Aorta (tissue), 5 donors: ENCODE measurements at regions of chr11 and their contacts with region 1.

Region 1: GRCh38 chr11:134050541-134051383 is 18.1 kb upstream of the JAM3 start:
- DNase-seq: peak; percentile 82 to 94
- ATAC-seq: peak; percentile 89
- H3K4me3 ChIP-seq: no peak overlapping the region
- H3K27ac ChIP-seq: no peak overlapping the region
- H3K4me1 ChIP-seq: no peaks in the 10 kb centered on the region
- H3K27me3 ChIP-seq: no peaks in the 10 kb centered on the region

Region 2: DNA sequence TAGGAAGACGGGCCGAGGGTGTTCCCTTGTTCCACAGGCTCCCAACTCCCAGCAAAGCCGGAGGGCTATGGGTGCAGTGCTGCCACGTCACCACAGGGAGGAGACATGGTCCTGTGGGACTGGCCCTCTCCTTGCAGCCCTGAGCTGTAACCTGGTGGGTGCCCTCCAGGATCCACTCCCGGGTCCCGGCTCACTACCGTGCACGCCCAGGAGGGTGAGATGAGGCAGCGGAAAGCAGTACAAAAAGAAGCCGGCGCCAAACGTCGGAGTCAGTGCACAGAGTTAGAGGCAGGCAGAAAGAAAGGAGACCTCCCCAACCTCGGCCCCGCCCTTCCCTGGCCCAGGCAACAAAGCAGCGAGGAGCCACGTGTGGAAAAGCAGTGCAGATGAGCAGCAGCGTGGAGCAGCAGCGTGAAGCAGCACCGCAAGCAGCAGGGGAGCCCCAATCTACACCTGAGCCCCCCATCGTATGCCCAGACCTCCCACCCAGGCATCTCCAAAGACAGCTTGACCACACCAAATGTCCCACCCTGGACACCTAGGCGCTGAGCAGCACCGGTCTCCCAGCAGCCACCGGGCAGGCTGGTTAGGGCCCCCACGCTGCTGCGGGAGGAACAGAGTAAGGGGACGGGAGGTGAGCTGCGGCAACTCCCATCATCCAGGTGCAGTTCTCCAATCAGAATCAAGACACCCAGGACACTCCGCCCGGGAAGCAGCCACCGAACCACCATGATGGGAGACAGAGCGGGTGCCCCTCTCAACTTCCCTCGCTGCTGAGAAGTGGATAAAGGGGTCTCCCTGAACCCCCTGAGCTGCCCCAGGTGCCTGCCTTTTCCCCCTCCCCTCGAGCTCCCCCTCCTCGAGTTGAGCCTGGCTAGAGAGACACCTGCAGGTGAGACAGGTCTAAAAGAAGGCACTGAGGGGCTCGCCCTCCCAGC is 122.8 kb before region 1 on chr11:
- intact Hi-C with region 1: loop called (anchors 2 kb)
- DNase-seq: peak in 1 of 2 donors; percentile 72
- ATAC-seq: peak; percentile 73
- H3K4me3 ChIP-seq: no peak overlapping the region
- H3K27ac ChIP-seq: no peak overlapping the region
- H3K4me1 ChIP-seq: no peaks in the 10 kb centered on the region
- H3K27me3 ChIP-seq: no peaks in the 10 kb centered on the region

Region 3: GRCh38 chr11:133956650-133957633 is 93.8 kb before region 1 on chr11 and contains the start of gene IGSF9B:
- intact Hi-C with region 1: loop called in 1 of 2 experiments (anchors 5 kb)
- DNase-seq: peak; percentile 86 to 95
- ATAC-seq: peak; percentile 91
- H3K4me3 ChIP-seq: peak within 1 kb of the TSS; percentile 40 to 74
- H3K27ac ChIP-seq: peak within 1 kb of the TSS; percentile 44 to 93
- H3K4me1 ChIP-seq: peaks cover 3 to 4% of the 10 kb centered on the region in 2 donors
- H3K27me3 ChIP-seq: no peaks in the 10 kb centered on the region
- total RNA-seq, gene IGSF9B: 59.7 to 93.9 TPM

Region 4: GRCh38 chr11:134101282-134101681 is 50.5 kb after region 1 on chr11:
- intact Hi-C with region 1: no loop called
- DNase-seq: no peak
- ATAC-seq: no peak
- H3K4me3 ChIP-seq: no peak overlapping the region
- H3K27ac ChIP-seq: no peak overlapping the region
- H3K4me1 ChIP-seq: no peaks in the 10 kb centered on the region
- H3K27me3 ChIP-seq: no peaks in the 10 kb centered on the region

Region 5: GRCh38 chr11:134139873-134140331 is 89.1 kb after region 1 on chr11:
- intact Hi-C with region 1: loop called (anchors 1 kb)
- DNase-seq: no peak
- ATAC-seq: peak; percentile 93
- H3K4me3 ChIP-seq: no peak overlapping the region
- H3K27ac ChIP-seq: peak overlapping the region; percentile 55 to 84
- H3K4me1 ChIP-seq: no peaks in the 10 kb centered on the region
- H3K27me3 ChIP-seq: no peaks in the 10 kb centered on the region

Region 6: GRCh38 chr11:134223836-134224709 is 173.3 kb after region 1 on chr11 and contains the starts of genes NCAPD3 and VPS26B:
- intact Hi-C with region 1: loop called in 1 of 2 experiments (anchors 10 kb)
- DNase-seq: peak; percentile 98 to 99
- ATAC-seq: peak; percentile 98
- H3K4me3 ChIP-seq: peak within 1 kb of the TSS; percentile 73 to 79
- H3K27ac ChIP-seq: peak within 1 kb of the TSS in 1 of 2 donors; percentile 78
- H3K4me1 ChIP-seq: peaks cover 0 to 5% of the 10 kb centered on the region in 2 donors
- H3K27me3 ChIP-seq: no peaks in the 10 kb centered on the region
- total RNA-seq, gene NCAPD3: 8.3 to 14.0 TPM
- total RNA-seq, gene VPS26B: 27.6 to 42.9 TPM

Region 7: DNA sequence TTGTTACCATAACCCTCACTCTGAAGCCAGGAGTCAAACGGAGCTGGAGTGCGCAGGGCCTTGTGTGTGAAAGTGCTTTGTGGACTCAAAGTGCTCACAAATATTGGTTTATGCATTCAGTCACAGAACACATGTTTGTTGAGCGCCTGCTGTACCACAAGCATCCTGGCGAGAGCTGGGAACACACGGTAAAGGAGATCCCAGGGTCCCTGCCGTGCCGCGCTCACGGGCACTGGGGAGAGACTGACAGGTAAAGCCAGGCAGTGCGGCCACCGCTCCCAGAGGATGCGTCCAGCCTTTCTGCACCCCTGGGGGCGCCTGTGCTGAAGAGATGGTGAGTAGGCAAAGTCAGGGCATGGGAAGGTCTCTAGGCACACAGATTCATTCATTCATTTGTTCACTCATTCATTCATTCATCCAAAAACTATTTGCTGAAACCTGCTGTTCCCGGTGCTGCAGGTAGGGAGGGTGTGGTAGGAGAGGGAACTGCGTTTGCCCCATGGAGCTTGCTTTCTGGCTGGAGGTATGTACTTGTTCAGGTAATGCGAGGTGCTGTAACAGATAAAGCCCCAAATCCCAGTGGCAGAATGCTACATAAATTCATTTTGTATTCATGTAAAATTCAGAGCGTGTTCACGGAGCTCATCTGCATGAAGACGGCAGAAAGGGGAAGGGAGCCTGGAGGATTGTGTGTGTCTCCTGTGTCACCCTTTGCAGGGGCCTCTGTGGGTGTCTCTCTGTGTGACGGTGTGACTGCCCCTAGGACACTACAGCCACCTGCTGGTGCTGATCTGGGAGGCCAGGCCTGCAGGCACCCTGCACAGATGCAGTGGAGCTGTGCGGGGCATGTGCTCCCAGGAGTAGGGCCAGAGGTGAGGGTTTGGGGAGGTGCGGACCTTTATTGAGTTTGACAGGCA is 528.3 kb after region 1 on chr11:
- intact Hi-C with region 1: no loop called
- DNase-seq: peak in 1 of 2 donors; percentile 67
- ATAC-seq: no peak
- H3K4me3 ChIP-seq: no peak overlapping the region
- H3K27ac ChIP-seq: no peak overlapping the region
- H3K4me1 ChIP-seq: no peaks in the 10 kb centered on the region
- H3K27me3 ChIP-seq: no peaks in the 10 kb centered on the region